Activated CD4-positive, alpha-beta memory T cell treated with anti-CD3 and anti-CD28 coated beads for 36 hours (primary cell): ENCODE measurements at regions of chr16 and their contacts with region 1.

Region 1: DNA sequence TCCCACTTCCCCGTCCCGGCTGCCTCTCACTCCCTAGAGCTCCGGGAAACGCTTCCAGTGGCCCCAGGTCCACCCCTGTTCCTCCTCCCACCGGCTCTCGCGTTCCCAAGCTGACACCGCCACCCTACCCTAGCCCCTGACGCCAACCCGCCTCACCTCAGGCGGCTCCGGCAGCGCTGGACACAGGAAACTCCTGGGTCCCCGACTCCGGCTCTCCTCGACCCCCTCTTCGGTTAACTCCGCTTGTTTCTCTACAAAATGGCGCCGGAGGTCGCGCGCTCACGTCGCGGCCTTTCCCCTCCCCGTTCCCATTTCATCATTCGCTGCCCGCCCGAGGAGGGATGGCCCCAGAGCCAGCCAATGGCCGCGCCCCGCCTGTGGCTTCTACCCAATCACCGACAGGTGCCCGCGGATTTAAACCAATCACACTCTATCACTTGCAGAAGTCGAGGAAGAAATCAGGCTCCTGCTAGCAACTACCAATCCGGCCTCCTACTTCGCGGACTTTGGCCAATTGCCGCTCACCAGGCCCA is at the start of gene CNOT1:
- DNase-seq: peak; percentile 99
- H3K4me3 Mint-ChIP-seq: peak within 1 kb of the TSS; percentile 89
- H3K27ac Mint-ChIP-seq: peak within 1 kb of the TSS; percentile 99
- H3K4me1 Mint-ChIP-seq: peaks cover 26% of the 10 kb centered on the region
- H3K27me3 Mint-ChIP-seq: peaks cover 1% of the 10 kb centered on the region
- total RNA-seq, gene CNOT1: 230 to 242 TPM

Region 2: GRCh38 chr16:58392215-58393137 is 237.2 kb before region 1 on chr16 and contains the start of gene GINS3:
- CTCF ChIA-PET with region 1: no interaction called
- POLR2A ChIA-PET with region 1: no interaction called
- intact Hi-C with region 1: loop called (anchors 1 kb)
- DNase-seq: peak; percentile 92
- H3K4me3 Mint-ChIP-seq: peak within 1 kb of the TSS; percentile 95
- H3K27ac Mint-ChIP-seq: peak within 1 kb of the TSS; percentile 96
- H3K4me1 Mint-ChIP-seq: peaks cover 11% of the 10 kb centered on the region
- H3K27me3 Mint-ChIP-seq: no peaks in the 10 kb centered on the region
- total RNA-seq, gene GINS3: 13.8 to 14.0 TPM

Region 3: GRCh38 chr16:58615280-58615679 is 14.4 kb before region 1 on chr16:
- CTCF ChIA-PET with region 1: interaction called, 3 read pairs
- POLR2A ChIA-PET with region 1: interaction called, 3 read pairs
- intact Hi-C with region 1: loop called (anchors 1 kb)
- DNase-seq: no peak
- H3K4me3 Mint-ChIP-seq: no peak overlapping the region
- H3K27ac Mint-ChIP-seq: peak overlapping the region; percentile 60
- H3K4me1 Mint-ChIP-seq: peaks cover 25% of the 10 kb centered on the region
- H3K27me3 Mint-ChIP-seq: no peaks in the 10 kb centered on the region

Region 4: DNA sequence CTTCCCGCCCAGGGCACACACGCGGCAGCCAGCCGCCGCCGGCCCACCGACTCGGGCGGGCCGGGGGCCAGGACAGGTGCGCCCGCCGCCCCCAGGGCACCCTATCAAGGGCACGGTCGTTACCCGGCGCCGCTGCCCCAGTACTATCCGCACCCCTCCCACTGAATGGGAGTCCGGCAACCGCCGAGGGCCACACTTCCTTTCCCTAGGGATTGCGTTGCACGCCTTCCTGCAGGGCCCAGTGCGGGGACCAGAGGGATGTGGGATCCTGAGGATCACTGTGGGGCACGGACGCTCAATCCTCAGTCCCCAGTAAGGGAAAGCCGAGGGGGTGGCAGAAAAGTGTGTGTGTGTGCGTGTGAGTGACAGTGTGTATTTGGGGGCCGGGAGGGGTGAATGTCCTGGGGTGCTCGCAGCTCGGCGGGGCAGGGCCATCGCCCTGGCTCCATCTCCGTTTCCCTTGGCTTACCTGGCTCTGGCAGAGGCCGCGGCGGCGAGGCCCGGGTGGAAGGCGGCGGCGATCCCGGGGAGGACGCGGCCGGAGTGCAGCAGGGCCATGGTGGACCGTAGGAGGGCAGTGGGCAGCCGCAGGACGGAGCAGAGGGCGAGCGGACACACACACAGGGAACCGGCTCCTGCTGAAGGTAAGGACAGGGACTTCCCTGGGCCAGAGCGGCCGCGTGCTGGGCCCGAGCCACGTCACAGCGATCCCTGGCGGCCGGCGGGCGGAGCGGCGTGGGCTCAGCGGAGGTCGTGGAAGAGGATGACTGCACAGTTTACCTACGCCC is 104.2 kb after region 1 on chr16 and contains the start of gene GOT2:
- CTCF ChIA-PET with region 1: interaction called, 3 read pairs
- POLR2A ChIA-PET with region 1: no interaction called
- intact Hi-C with region 1: loop called (anchors 1 kb)
- DNase-seq: peak; percentile 88
- H3K4me3 Mint-ChIP-seq: peak within 1 kb of the TSS; percentile 98
- H3K27ac Mint-ChIP-seq: peak within 1 kb of the TSS; percentile 88
- H3K4me1 Mint-ChIP-seq: peaks cover 38% of the 10 kb centered on the region
- H3K27me3 Mint-ChIP-seq: no peaks in the 10 kb centered on the region
- total RNA-seq, gene GOT2: 125 to 127 TPM